ENCODE measurements at regions of chr3 and their contacts with region 1.

Region 1: GRCh38 chr3:57826245-57826951 is 70.3 kb downstream of the SLMAP start:
- DNase-seq: no peak
- H3K4me3 ChIP-seq: no peak overlapping the region
- H3K27ac ChIP-seq: no peak overlapping the region
- H3K4me1 ChIP-seq: peaks cover 61% of the 10 kb centered on the region
- H3K27me3 ChIP-seq: no peaks in the 10 kb centered on the region
- CTCF ChIP-seq: peak; percentile 38

Region 2: DNA sequence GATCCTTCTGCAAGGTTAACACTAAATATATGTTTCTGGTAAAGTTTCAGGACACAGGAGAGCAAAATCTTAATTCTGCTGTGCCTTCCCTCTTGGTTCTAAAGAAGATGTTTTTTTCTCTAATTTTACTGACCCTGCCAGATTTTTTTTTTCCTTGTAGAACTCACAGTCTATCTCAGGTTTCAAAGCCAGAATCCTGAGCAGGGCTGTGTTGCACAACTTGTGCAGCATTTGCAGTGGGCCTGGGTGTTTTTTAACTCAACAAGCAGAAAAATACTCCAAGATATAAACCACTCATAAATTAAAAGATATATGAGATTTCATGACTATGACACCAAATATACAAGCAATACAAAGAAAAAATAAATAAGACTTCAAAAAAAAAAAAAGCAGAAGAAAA is 189.0 kb before region 1 on chr3:
- intact Hi-C with region 1: loop called (anchors 10 kb)
- DNase-seq: no peak
- H3K4me3 ChIP-seq: no peak overlapping the region
- H3K27ac ChIP-seq: no peak overlapping the region
- H3K4me1 ChIP-seq: no peaks in the 10 kb centered on the region
- H3K27me3 ChIP-seq: no peaks in the 10 kb centered on the region
- CTCF ChIP-seq: no peak